Thyroid gland (tissue), 4 donors: ENCODE measurements at regions of chr2 and their contacts with region 1.

Region 1: DNA sequence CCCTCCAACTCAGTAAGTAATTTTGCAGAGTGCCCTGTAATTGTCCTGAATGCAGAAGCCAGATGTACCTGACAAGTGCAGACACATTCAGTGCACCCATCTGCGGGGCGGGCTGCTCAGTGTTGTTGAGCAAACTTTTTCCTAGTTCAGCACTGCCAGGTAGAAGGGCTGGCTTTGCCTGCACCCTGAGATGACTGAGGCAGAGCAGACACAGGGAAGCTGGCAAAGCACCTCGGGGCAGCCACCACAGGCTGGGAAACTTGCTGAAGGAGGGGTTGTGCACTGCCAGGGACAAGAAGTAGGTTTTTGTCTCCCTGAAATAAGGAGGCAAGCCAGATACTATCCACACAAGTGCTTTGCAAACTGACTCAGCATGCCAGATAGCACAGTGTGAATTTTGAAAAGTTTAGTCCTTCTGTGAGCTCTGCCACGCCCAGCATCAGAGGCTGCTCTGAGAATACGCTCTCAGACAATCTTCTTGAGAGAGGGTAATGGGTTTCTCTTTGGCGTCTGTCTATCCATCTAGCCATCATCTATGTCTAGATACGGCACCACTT is 62.3 kb downstream of the SOWAHC start:
- DNase-seq: peak; percentile 43 to 51
- H3K4me3 ChIP-seq: no peak overlapping the region
- H3K27ac ChIP-seq: peak overlapping the region; percentile 16 to 87 (median 54)
- H3K4me1 ChIP-seq: peaks cover 35 to 61% of the 10 kb centered on the region in 2 donors
- H3K27me3 ChIP-seq: no peaks in the 10 kb centered on the region
- CTCF ChIP-seq: no peak
- POLR2A ChIP-seq: no peak

Region 2: DNA sequence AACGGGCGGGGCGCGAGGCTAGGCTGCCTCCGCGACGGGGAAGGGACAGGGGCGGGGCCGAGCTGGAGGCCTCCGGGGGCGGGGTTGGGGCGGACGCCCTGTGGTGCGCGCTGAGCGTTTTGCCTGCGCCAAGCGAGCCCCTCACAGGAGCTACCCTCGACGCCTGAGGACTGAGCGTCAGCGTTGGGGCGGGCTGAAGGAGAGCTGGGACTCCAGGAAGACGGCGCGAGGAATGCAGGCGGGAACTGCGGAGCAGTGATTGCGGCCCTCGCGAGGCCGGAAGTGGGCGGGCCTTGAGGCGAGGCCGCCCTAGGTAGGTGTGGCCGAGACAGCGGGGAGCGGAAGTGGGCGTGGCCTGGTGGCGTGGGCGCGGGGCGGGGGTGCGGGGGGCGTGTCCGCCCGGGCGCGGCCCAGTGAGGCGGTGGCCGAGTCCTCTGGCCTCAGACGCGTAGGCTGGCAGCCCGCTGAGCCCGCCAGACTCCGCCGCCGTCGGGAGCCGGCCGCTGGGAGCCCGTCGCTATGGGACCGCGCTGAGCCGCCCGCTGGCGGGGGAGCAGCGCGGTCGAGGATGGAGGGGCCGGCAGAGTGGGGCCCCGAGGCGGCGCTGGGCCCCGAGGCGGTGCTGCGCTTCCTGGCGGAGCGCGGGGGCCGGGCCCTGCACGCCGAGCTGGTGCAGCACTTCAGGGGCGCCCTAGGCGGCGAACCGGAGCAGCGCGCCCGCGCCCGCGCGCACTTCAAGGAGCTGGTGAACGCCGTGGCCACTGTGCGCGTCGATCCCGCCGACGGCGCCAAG is 62.3 kb before region 1 on chr2 and contains the starts of genes SEPTIN10 and SOWAHC:
- intact Hi-C with region 1: loop called (anchors 10 kb)
- DNase-seq: peak; percentile 98
- H3K4me3 ChIP-seq: peak within 1 kb of the TSS; percentile 48 to 79 (median 70)
- H3K27ac ChIP-seq: peak within 1 kb of the TSS; percentile 89 to 97 (median 96)
- H3K4me1 ChIP-seq: peaks cover 14 to 22% of the 10 kb centered on the region in 2 donors
- H3K27me3 ChIP-seq: no peaks in the 10 kb centered on the region
- CTCF ChIP-seq: no peak
- POLR2A ChIP-seq: peak; percentile 91 to 93
- total RNA-seq, gene SEPTIN10: 61.7 to 99.3 (median 70.4) TPM
- total RNA-seq, gene SOWAHC: 13.4 to 18.7 (median 17.0) TPM

Region 3: DNA sequence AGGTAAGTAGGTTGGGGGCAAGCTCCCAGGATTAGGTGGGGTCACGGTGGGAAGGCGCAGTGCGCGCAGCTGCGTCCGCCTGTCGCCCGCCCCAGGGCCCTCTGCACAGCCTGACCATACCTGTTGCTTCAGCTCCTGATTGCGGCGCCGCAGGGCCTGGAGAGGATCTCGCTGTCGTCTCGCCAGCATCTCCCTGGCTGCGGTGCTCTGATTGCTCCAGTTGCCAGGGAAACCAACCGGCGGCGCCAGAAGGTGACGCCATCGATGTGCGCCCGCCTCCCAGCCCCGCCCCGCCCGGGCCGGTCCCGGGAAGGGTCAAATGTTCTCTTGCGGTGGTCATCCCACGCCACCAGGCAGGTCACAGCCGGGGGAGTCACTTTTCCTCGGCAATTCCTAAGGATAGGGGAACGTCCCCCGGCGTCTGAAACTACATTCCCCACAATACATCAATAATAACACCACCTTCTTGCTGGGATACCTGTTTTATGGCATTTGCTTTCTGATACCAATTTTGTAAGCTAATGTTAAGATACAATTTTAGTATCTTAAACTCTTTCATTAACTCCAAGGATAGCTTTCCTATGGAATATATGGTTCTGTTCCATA is 528.5 kb after region 1 on chr2 and contains the start of gene NPHP1:
- intact Hi-C with region 1: no loop called
- DNase-seq: peak; percentile 81
- H3K4me3 ChIP-seq: peak within 1 kb of the TSS; percentile 16 to 50 (median 45)
- H3K27ac ChIP-seq: peak within 1 kb of the TSS in 2 of 3 donors; percentile 4 to 42
- H3K4me1 ChIP-seq: peaks cover 0 to 7% of the 10 kb centered on the region in 2 donors
- H3K27me3 ChIP-seq: no peaks in the 10 kb centered on the region
- CTCF ChIP-seq: no peak
- POLR2A ChIP-seq: peak in 1 of 2 donors; percentile 60
- total RNA-seq, gene NPHP1: 11.0 to 23.3 (median 12.8) TPM